Activated B cell treated with CpG ODN at 0.5 μM for 24 hours (primary cell): ENCODE measurements at regions of chr13 and their contacts with region 1.

Region 1: DNA sequence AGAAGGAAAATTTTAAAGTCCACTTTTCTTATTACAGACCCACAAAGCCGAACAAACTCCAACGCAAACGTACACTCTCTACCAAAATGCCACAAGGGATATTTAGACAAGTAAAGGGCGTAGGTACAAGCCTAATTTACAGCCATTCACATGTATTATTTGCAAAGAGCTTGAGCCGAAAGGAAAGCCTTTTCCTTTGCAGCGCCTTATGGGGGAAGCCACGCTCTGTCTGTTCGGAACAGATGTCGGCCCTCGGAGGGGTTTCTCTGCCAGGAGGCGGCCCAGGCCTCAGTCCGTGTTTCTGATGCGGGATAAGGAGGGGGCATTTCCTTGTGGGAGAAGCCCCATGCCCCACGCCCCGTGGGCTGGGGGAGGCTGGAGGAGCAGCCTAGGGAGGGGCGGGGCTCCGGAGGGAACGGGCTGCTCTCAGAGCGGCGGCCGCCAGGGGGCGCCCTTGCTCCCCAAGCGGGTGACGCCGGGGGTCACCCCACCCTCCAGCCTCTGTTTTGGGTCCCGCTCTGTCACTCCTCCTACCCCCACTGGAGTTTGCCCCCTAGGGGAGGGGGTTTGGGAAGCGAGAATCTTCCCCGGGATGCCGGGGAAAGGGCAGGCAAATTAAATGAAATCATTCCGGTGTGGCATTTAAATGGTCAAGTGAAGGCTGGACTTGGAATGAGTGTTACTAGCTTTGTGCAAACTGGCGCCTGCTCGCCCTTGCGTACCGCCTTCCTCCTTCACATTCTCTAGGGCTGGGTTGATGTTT is 2.9 kb downstream of the HTR2A start:
- DNase-seq: peak; percentile 67
- ATAC-seq: peak; percentile 91
- H3K4me3 Mint-ChIP-seq: peak overlapping the region; percentile 74
- H3K27ac Mint-ChIP-seq: no peak overlapping the region
- H3K4me1 Mint-ChIP-seq: peaks cover 24% of the 10 kb centered on the region
- H3K27me3 Mint-ChIP-seq: peaks cover 32% of the 10 kb centered on the region
- CTCF ChIP-seq: peak; percentile 72

Region 2: GRCh38 chr13:47459512-47459911 is 565.5 kb after region 1 on chr13:
- CTCF ChIA-PET with region 1: no interaction called
- POLR2A ChIA-PET with region 1: no interaction called
- intact Hi-C with region 1: loop called (anchors 5 kb)
- DNase-seq: no peak
- ATAC-seq: no peak
- H3K4me3 Mint-ChIP-seq: no peak overlapping the region
- H3K27ac Mint-ChIP-seq: no peak overlapping the region
- H3K4me1 Mint-ChIP-seq: no peaks in the 10 kb centered on the region
- H3K27me3 Mint-ChIP-seq: no peaks in the 10 kb centered on the region
- CTCF ChIP-seq: no peak

Region 3: GRCh38 chr13:47598340-47598911 is 704.4 kb after region 1 on chr13:
- CTCF ChIA-PET with region 1: interaction called, 4 read pairs
- POLR2A ChIA-PET with region 1: no interaction called
- intact Hi-C with region 1: loop called (anchors 5 kb)
- DNase-seq: no peak
- ATAC-seq: no peak
- H3K4me3 Mint-ChIP-seq: no peak overlapping the region
- H3K27ac Mint-ChIP-seq: no peak overlapping the region
- H3K4me1 Mint-ChIP-seq: no peaks in the 10 kb centered on the region
- H3K27me3 Mint-ChIP-seq: no peaks in the 10 kb centered on the region
- CTCF ChIP-seq: no peak